SK-N-SH (cell line): ENCODE measurements at regions of chr19 and their contacts with region 1.

Region 1: GRCh38 chr19:56252699-56253422 is 19.7 kb upstream of the EDDM13 start:
- DNase-seq: peak; percentile 74
- H3K4me3 ChIP-seq: peak overlapping the region in 1 of 2 experiments; percentile 28; a peak in 1 of 4 replicates
- H3K27ac ChIP-seq: no peak overlapping the region
- H3K4me1 ChIP-seq: peaks cover 0 to 4% of the 10 kb centered on the region in 2 experiments; a peak in 1 of 4 replicates
- H3K27me3 ChIP-seq: no peaks in the 10 kb centered on the region
- CTCF ChIP-seq: peak; percentile 83
- EP300 ChIP-seq: no peak
- RAD21 ChIP-seq: peak; percentile 56

Region 2: DNA sequence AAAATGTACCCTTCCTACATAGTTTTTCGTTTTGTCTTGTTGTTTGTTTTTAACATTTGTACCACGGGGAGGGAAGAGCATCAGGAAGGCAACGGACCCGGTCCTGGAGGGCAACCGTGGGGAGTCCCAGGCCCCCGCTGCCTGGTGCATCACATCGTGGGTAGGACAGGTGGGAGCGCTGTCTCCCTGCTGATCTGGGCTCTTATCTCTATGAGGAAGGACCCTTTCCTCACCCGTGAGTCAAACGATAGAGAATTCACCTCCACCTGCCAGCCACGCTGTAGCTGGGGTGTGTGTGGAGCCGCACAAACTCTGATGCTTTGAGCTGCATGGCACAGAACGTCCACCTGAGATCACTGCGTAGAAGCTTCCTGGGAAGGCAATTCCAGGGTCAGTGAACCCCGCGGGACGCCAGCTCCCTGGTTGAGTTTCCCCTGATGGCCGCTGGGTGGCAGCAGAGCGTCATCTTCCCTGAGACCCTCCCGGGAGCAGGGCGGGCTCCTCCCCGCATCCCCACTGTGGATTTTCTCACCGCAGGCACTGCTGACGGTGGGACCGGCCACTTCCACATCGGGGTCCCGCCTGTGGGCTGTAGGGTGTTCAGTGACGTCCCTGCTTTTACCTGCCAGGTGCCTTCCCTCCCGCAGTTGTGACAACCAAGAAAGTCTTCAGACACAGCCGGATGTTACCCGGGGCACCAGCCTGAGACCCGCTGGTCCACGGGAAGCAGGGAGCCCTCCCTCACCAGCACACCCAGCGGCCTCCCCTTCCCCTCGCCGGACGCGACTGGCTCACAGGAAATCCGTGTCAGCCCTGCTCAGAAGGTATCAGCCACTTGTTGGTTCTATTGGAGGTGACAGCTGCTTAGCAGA is 186.5 kb before region 1 on chr19:
- CTCF ChIA-PET with region 1: interaction called, 21 read pairs
- POLR2A ChIA-PET with region 1: no interaction called
- DNase-seq: peak; percentile 89
- H3K4me3 ChIP-seq: peak overlapping the region; percentile 26 to 54
- H3K27ac ChIP-seq: no peak overlapping the region
- H3K4me1 ChIP-seq: peaks cover 0 to 7% of the 10 kb centered on the region in 2 experiments; a peak in 1 of 4 replicates
- H3K27me3 ChIP-seq: peaks cover 10% of the 10 kb centered on the region; the same call in 1 of the 2 replicates
- CTCF ChIP-seq: peak; percentile 87
- EP300 ChIP-seq: no peak
- RAD21 ChIP-seq: peak; percentile 75

Region 3: DNA sequence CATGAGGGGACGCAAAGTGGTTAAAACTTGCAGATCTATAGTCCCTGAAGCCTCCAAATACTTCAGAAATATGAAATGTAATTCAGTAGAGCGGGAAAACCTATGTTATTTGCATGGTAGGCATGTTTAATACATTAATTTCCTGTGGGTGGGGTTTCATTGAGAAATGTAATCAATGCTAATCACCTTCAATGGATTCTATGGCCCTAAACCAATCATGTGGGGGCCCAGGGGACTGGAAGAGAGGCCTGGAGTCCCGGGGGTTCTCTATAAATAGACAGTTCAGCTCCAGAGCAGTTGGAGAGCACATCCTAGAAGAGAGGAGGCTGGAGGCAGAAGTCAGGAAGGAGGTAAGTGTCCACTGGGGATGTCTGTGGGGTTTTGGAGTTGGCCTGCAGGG is 50.9 kb before region 1 on chr19 and contains the start of gene ZSCAN5C:
- CTCF ChIA-PET with region 1: no interaction called
- POLR2A ChIA-PET with region 1: no interaction called
- DNase-seq: no peak
- H3K4me3 ChIP-seq: no peak within 1 kb of the TSS
- H3K27ac ChIP-seq: no peak within 1 kb of the TSS
- H3K4me1 ChIP-seq: no peaks in the 10 kb centered on the region
- H3K27me3 ChIP-seq: peaks cover 43% of the 10 kb centered on the region; the same call in 1 of the 2 replicates
- CTCF ChIP-seq: no peak
- EP300 ChIP-seq: no peak
- RAD21 ChIP-seq: no peak
- polyA plus RNA-seq, gene ZSCAN5C: not detected in 2 replicates

Region 4: DNA sequence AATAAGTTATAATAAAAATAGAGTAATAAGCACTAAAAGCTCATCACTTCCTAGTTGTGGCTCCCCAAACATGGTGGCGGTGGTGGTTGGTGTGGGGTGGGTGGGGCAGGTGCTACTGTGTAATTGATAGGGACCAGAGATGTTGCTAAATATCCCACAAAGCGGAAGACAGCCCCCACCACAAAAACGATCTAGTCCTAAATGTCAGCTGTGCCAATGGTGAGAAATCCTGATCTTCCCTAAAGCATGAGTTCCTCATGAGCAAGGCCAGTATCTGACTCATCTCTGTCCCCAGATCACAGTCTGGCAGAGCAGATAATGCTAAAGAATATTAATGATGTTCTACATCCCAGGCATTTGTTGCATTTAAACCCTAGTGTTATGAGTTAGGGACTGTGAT is 17.8 kb after region 1 on chr19:
- CTCF ChIA-PET with region 1: interaction called, 20 read pairs
- POLR2A ChIA-PET with region 1: no interaction called
- DNase-seq: no peak
- H3K4me3 ChIP-seq: no peak overlapping the region
- H3K27ac ChIP-seq: no peak overlapping the region
- H3K4me1 ChIP-seq: peaks cover 12 to 22% of the 10 kb centered on the region in 2 experiments
- H3K27me3 ChIP-seq: no peaks in the 10 kb centered on the region
- CTCF ChIP-seq: no peak
- EP300 ChIP-seq: no peak
- RAD21 ChIP-seq: no peak

Region 5: GRCh38 chr19:56314562-56315077 is 61.8 kb after region 1 on chr19 and contains the start of gene ZSCAN5A:
- CTCF ChIA-PET with region 1: interaction called, 42 read pairs
- POLR2A ChIA-PET with region 1: interaction called, 4 read pairs
- DNase-seq: peak; percentile 96
- H3K4me3 ChIP-seq: peak within 1 kb of the TSS; percentile 77 to 89
- H3K27ac ChIP-seq: peak within 1 kb of the TSS; percentile 95 to 99
- H3K4me1 ChIP-seq: peaks cover 0 to 13% of the 10 kb centered on the region in 2 experiments; a peak in 2 of 4 replicates
- H3K27me3 ChIP-seq: no peaks in the 10 kb centered on the region
- CTCF ChIP-seq: no peak
- EP300 ChIP-seq: no peak
- RAD21 ChIP-seq: no peak
- polyA plus RNA-seq, gene ZSCAN5A: 6.8 and 11.7 TPM in 2 replicates

Region 6: GRCh38 chr19:56350416-56351045 is 97.7 kb after region 1 on chr19:
- CTCF ChIA-PET with region 1: interaction called, 53 read pairs
- POLR2A ChIA-PET with region 1: no interaction called
- DNase-seq: peak; percentile 55
- H3K4me3 ChIP-seq: no peak overlapping the region
- H3K27ac ChIP-seq: no peak overlapping the region
- H3K4me1 ChIP-seq: no peaks in the 10 kb centered on the region
- H3K27me3 ChIP-seq: no peaks in the 10 kb centered on the region
- CTCF ChIP-seq: peak; percentile 81
- EP300 ChIP-seq: no peak
- RAD21 ChIP-seq: peak; percentile 73